ENCODE measurements at regions of chr5 and their contacts with region 1.

Region 1: GRCh38 chr5:25029004-25029403 is 384.2 kb upstream of the CDH10 start:
- DNase-seq: no peak
- ATAC-seq: no peak
- H3K4me3 ChIP-seq: no peak overlapping the region
- H3K27ac ChIP-seq: no peak overlapping the region
- H3K4me1 ChIP-seq: no peaks in the 10 kb centered on the region
- H3K27me3 ChIP-seq: no peaks in the 10 kb centered on the region
- CTCF ChIP-seq: no peak

Region 2: DNA sequence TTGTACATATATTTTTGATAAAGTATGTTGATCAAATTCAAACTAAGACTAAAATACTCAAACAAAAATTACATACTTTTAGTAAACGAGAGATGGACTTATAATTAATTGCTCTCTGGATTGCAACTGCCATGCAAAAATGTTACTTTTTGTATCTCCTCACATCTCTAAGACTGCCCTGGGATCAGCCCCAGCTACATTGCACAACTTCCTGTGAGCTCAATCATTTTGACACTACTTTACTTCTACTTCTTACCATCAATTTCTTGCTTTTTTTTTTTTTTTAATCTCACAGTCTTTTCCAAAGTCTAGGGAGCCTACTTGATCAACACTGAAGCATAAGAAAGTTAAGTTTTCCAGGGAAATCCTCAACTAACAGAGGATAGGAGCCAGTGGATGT is 121.8 kb after region 1 on chr5:
- CTCF ChIA-PET with region 1: no interaction called
- POLR2A ChIA-PET with region 1: interaction called, 14 read pairs
- intact Hi-C with region 1: no loop called
- DNase-seq: no peak
- ATAC-seq: no peak
- H3K4me3 ChIP-seq: no peak overlapping the region
- H3K27ac ChIP-seq: no peak overlapping the region
- H3K4me1 ChIP-seq: no peaks in the 10 kb centered on the region
- H3K27me3 ChIP-seq: no peaks in the 10 kb centered on the region
- CTCF ChIP-seq: no peak

Measured in PC-3 (cell line).